Endothelial cell of umbilical vein (primary cell): ENCODE measurements at regions of chr19 and their contacts with region 1.

Region 1: DNA sequence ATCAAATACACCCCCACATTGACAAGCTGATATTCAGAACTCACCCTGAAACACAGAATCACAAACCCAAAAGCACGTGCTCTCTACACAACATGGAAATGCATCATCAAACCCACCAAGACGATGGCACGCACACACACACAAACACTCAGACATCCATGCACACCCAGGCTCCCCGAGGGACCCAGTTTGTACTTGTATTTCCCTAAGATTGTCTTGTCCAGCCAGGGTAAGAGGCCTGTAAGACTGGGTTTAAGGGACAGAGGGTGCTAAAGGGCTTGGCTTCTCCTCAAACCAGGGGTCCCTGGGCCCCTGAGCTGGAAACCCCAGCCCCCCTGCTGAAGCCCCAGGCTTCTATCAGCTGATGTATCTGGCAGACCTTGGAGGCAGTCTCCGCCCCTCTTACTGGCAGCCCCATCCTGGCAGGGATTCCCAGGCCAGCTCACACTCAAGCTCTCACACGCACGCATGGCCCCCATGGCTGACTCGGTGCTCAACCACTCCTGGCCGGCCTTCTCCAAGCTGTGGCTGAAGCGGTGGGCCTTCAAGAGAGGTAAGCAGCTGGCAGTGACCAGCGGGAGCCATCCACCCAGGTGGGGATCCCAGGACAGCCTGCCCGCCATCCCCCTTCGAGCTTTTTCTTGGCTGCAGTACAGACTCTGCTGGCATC is 6.5 kb downstream of the ARHGEF18 start:
- DNase-seq: no peak
- H3K4me3 ChIP-seq: no peak overlapping the region
- H3K27ac ChIP-seq: no peak overlapping the region
- H3K4me1 ChIP-seq: no peaks in the 10 kb centered on the region
- H3K27me3 ChIP-seq: peaks cover 0 to 5% of the 10 kb centered on the region in 2 experiments
- CTCF ChIP-seq: no peak
- POLR2A ChIP-seq: no peak

Region 2: DNA sequence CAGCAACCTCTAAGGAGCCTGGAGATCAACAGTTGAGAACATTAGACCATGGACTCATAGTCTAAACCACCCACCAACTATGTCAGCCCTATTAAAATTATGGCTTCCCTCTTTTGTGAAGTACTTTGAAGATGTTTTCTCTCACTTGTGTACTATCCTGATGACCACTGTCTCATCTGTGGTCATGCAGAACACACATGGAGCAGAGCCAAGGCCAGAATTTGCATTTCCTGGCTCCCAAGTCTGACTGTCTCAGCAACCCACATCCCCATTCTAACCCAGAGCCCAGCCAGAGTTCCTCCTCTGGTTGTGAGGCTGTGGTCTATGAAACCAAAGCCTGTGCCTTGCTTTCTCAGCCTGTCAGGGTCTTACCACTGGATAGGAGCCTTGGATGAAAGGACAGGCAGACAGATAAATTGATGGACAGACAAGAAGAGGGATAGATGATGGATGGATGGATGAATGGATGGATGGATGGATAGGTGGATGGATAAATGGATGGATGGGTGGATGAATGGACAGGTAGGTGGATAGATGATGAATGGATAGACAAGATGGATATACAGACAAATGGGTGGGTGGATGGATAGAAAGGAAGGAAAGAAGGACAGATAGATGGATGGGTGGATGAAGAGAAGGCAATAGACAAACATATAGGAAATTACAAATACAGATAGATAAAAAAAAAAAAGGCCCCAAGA is 250.4 kb before region 1 on chr19:
- CTCF ChIA-PET with region 1: interaction called, 46 read pairs
- POLR2A ChIA-PET with region 1: no interaction called
- dilution Hi-C with region 1: no loop called
- intact Hi-C with region 1: no loop called
- DNase-seq: no peak
- H3K4me3 ChIP-seq: no peak overlapping the region
- H3K27ac ChIP-seq: no peak overlapping the region
- H3K4me1 ChIP-seq: no peaks in the 10 kb centered on the region
- H3K27me3 ChIP-seq: no peaks in the 10 kb centered on the region
- CTCF ChIP-seq: no peak
- POLR2A ChIP-seq: no peak

Region 3: DNA sequence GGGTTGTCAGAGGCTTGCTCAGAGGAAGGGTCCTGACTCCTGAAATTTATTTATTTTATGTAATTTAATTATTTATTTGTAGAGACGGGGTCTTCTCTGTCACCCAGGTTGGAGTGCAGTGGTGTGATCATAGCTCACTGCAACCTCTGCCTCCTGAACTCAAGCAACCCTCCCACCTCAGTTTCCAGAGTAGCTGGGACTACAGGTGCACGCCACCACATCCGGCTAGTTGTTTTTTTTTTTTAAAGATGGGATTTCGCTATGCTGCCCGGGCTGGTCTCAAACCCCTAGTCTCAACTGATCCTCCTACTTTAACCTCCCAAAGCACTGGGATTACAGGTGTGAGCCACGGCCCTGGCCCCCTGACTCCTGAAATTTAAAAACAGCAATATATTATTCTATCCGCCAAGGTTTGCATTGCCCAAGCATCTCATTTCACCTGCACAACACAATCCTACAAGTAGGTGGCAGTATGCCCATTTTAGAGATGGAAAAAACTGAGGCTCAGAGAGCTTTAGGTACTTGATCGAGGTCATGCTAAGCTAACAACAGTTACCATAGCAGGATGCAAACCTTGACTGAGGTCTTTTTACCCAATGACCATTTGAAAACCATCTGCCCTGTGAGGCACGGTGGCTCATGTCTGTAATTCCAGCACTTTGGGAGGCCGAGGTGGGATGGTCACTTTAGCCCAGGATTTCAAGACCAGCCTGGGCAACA is 11.6 kb after region 1 on chr19:
- CTCF ChIA-PET with region 1: interaction called, 20 read pairs
- POLR2A ChIA-PET with region 1: no interaction called
- dilution Hi-C with region 1: no loop called
- intact Hi-C with region 1: no loop called
- DNase-seq: peak; percentile 32
- H3K4me3 ChIP-seq: no peak overlapping the region
- H3K27ac ChIP-seq: no peak overlapping the region
- H3K4me1 ChIP-seq: no peaks in the 10 kb centered on the region
- H3K27me3 ChIP-seq: no peaks in the 10 kb centered on the region
- CTCF ChIP-seq: peak; percentile 2 to 45
- POLR2A ChIP-seq: no peak

Region 4: DNA sequence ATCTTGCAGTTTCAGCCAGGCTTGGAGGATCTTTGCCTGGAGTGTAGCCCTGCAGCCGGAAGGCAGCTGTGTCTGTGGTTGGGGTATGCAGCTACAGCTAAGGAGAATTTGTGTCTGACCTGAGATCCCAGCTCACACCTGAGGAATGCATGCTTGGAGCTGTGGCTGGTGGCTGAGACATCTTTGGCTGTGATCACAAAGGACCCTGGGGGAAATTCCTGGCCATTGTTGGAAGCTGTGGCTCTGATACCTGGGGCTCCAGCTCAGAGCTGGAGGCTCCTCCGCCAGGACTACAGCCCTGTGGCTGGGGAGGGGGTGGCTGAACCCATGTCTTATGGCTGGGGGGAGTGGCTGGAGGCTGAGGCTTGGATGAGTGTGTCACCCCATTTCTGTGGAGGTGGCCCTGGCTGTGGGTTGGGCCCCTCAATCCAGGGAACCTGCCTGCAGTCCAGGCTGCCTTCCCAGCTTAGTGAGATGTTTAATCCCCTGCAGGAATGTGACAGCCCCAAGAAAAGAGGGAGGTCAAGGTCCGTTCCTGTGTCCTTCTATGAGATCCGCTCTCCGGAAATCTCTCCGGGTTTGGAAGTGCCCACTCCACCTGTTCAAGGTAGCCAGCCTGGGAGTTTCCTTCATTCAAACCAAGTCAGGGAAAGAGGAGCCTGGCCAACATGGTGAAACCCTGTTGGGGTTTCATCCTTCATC is 21.0 kb after region 1 on chr19:
- CTCF ChIA-PET with region 1: interaction called, 32 read pairs
- POLR2A ChIA-PET with region 1: interaction called, 3 read pairs
- dilution Hi-C with region 1: no loop called
- intact Hi-C with region 1: loop called (anchors 1 kb)
- DNase-seq: no peak
- H3K4me3 ChIP-seq: no peak overlapping the region
- H3K27ac ChIP-seq: no peak overlapping the region
- H3K4me1 ChIP-seq: no peaks in the 10 kb centered on the region
- H3K27me3 ChIP-seq: no peaks in the 10 kb centered on the region
- CTCF ChIP-seq: no peak
- POLR2A ChIP-seq: no peak

Region 5: GRCh38 chr19:7382694-7383093 is 27.4 kb after region 1 on chr19:
- CTCF ChIA-PET with region 1: interaction called, 32 read pairs
- POLR2A ChIA-PET with region 1: interaction called, 3 read pairs
- dilution Hi-C with region 1: no loop called
- intact Hi-C with region 1: loop called (anchors 1 kb)
- DNase-seq: no peak
- H3K4me3 ChIP-seq: no peak overlapping the region
- H3K27ac ChIP-seq: no peak overlapping the region
- H3K4me1 ChIP-seq: no peaks in the 10 kb centered on the region
- H3K27me3 ChIP-seq: no peaks in the 10 kb centered on the region
- CTCF ChIP-seq: no peak
- POLR2A ChIP-seq: no peak